Activated CD8-positive, alpha-beta T cell treated with anti-CD3 and anti-CD28 coated beads, Interleukin-2, amount 10 ng/mL, durations not matched to agents 7 days and 5 days (primary cell): ENCODE measurements at regions of chr2 and their contacts with region 1.

Region 1: GRCh38 chr2:88038263-88039105 is 17.1 kb downstream of the KRCC1 start:
- DNase-seq: no peak
- ATAC-seq: no peak
- H3K4me3 Mint-ChIP-seq: no peak overlapping the region
- H3K27ac Mint-ChIP-seq: no peak overlapping the region
- H3K4me1 Mint-ChIP-seq: no peaks in the 10 kb centered on the region
- H3K27me3 Mint-ChIP-seq: no peaks in the 10 kb centered on the region

Region 2: GRCh38 chr2:88024509-88024908 is 14.0 kb before region 1 on chr2:
- CTCF ChIA-PET with region 1: no interaction called
- POLR2A ChIA-PET with region 1: no interaction called
- DNase-seq: no peak
- ATAC-seq: no peak
- H3K4me3 Mint-ChIP-seq: no peak overlapping the region
- H3K27ac Mint-ChIP-seq: no peak overlapping the region
- H3K4me1 Mint-ChIP-seq: peaks cover 9% of the 10 kb centered on the region
- H3K27me3 Mint-ChIP-seq: no peaks in the 10 kb centered on the region

Region 3: DNA sequence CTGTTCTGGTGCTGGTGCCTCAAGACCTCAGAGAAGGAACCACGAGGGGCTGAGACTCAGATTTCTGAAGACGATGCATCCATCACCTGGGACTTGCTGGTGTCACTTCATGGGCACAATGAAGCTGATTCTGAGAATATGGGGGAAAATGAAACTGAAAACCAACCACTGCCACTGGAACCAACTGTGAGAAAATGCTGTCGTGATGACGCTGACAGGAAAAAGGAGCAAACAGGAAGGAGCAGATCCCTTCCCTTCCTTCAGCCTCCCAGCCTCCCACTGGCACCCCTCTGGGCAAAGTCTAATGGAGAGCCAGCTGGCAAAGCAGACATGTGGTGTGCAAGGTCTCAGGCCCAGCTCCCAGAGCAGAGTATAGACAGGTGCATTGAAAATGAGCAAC is 304.3 kb after region 1 on chr2:
- CTCF ChIA-PET with region 1: no interaction called
- POLR2A ChIA-PET with region 1: interaction called, 10 read pairs
- DNase-seq: peak; percentile 28
- ATAC-seq: peak; percentile 49
- H3K4me3 Mint-ChIP-seq: peak overlapping the region; percentile 23
- H3K27ac Mint-ChIP-seq: no peak overlapping the region
- H3K4me1 Mint-ChIP-seq: peaks cover 9% of the 10 kb centered on the region
- H3K27me3 Mint-ChIP-seq: peaks cover 4% of the 10 kb centered on the region